Activated T-helper 1 cell treated with anti-CD3 and anti-CD28 coated beads, Interleukin-12 subunit alpha, Interleukin-12 subunit beta, Interleukin-2, Interleukin-4 antibody, amounts not matched to agents 30 ng/mL and 10 ng/mL and 1 ng/mL, durations not matched to agents 14 hours and 24 hours and 36 hours (primary cell): ENCODE measurements at regions of chr19 and their contacts with region 1.

Region 1: GRCh38 chr19:58451358-58452101 is at the start of gene ZNF324B:
- DNase-seq: peak; percentile 95
- H3K4me3 Mint-ChIP-seq: peak within 1 kb of the TSS; percentile 85
- H3K27ac Mint-ChIP-seq: peak within 1 kb of the TSS; percentile 48
- H3K4me1 Mint-ChIP-seq: peaks cover 18% of the 10 kb centered on the region
- H3K27me3 Mint-ChIP-seq: peaks cover 7% of the 10 kb centered on the region
- total RNA-seq, gene ZNF324B: 14.3 and 15.1 TPM in 2 replicates

Region 2: DNA sequence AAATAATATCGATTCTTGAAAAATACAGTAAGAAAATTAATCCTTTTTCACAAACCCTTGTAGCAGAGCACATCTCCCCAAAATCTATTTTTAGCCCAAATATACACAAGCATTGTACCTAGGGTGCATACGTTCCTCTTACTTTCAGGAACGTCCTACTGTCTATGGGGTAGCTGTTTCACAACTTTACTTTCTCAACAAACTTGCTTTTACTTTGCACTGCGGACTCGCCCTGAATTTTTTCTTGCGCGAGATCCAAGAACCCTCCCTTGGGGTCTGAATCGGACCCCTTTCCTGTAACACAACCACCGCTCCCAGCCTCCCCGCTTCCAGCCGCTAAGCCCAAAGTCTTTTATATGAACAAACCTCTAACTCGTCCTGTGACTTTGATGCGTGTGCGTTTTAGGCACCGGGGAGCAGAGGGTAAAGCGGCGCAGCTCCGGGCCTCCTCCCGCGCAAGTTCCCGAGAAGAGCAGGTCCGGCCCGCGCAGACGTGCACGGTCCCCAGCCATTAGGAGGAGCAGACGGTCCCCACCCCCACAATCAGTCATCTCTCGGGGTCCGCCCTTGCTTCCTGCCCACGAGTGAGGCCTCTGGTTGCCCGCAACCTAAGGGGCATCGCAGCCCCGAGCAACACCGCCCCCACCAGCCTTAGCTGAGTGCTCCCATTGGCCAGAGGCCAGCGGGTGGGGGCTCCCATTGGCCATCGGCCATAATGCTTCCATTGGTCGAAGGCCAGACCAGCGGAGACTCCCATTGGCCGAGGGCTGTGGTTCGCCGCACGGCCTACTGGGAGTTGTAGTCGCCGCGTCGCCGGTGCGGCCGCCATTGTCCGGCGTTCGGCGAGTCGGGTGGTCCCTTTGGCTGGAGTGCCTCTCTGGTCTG is 173.1 kb before region 1 on chr19 and contains the start of gene ZNF8:
- intact Hi-C with region 1: loop called (anchors 1 kb)
- DNase-seq: peak; percentile 97
- H3K4me3 Mint-ChIP-seq: peak within 1 kb of the TSS; percentile 92
- H3K27ac Mint-ChIP-seq: peak within 1 kb of the TSS; percentile 93
- H3K4me1 Mint-ChIP-seq: peaks cover 23% of the 10 kb centered on the region
- H3K27me3 Mint-ChIP-seq: no peaks in the 10 kb centered on the region
- total RNA-seq, gene ZNF8: 4.0 and 4.4 TPM in 2 replicates

Region 3: GRCh38 chr19:58346961-58347931 is 104.3 kb before region 1 on chr19:
- intact Hi-C with region 1: loop called (anchors 1 kb)
- DNase-seq: peak; percentile 63
- H3K4me3 Mint-ChIP-seq: peak overlapping the region; percentile 92
- H3K27ac Mint-ChIP-seq: peak overlapping the region; percentile 83
- H3K4me1 Mint-ChIP-seq: peaks cover 29% of the 10 kb centered on the region
- H3K27me3 Mint-ChIP-seq: no peaks in the 10 kb centered on the region

Region 4: GRCh38 chr19:58362272-58362994 is 89.1 kb before region 1 on chr19 and contains the start of gene ZNF497:
- intact Hi-C with region 1: loop called (anchors 1 kb)
- DNase-seq: peak; percentile 95
- H3K4me3 Mint-ChIP-seq: peak within 1 kb of the TSS; percentile 94
- H3K27ac Mint-ChIP-seq: peak within 1 kb of the TSS; percentile 95
- H3K4me1 Mint-ChIP-seq: peaks cover 7% of the 10 kb centered on the region
- H3K27me3 Mint-ChIP-seq: no peaks in the 10 kb centered on the region
- total RNA-seq, gene ZNF497: 0.76 and 0.93 TPM in 2 replicates

Region 5: GRCh38 chr19:58386576-58387337 is 64.8 kb before region 1 on chr19 and contains the start of gene RPS5:
- intact Hi-C with region 1: loop called (anchors 1 kb)
- DNase-seq: peak; percentile 95
- H3K4me3 Mint-ChIP-seq: peak within 1 kb of the TSS; percentile 93
- H3K27ac Mint-ChIP-seq: peak within 1 kb of the TSS; percentile 99
- H3K4me1 Mint-ChIP-seq: peaks cover 35% of the 10 kb centered on the region
- H3K27me3 Mint-ChIP-seq: no peaks in the 10 kb centered on the region
- total RNA-seq, gene RPS5: 1,157 and 1,161 TPM in 2 replicates

Region 6: GRCh38 chr19:58466760-58467589 is 15.4 kb after region 1 on chr19 and contains the start of gene ZNF324:
- intact Hi-C with region 1: loop called (anchors 1 kb)
- DNase-seq: peak; percentile 96
- H3K4me3 Mint-ChIP-seq: peak within 1 kb of the TSS; percentile 88
- H3K27ac Mint-ChIP-seq: peak within 1 kb of the TSS; percentile 71
- H3K4me1 Mint-ChIP-seq: peaks cover 17% of the 10 kb centered on the region
- H3K27me3 Mint-ChIP-seq: no peaks in the 10 kb centered on the region
- total RNA-seq, gene ZNF324: 12.8 and 15.5 TPM in 2 replicates

Region 7: GRCh38 chr19:58483776-58484175 is 32.2 kb after region 1 on chr19:
- intact Hi-C with region 1: no loop called
- DNase-seq: no peak
- H3K4me3 Mint-ChIP-seq: no peak overlapping the region
- H3K27ac Mint-ChIP-seq: no peak overlapping the region
- H3K4me1 Mint-ChIP-seq: peaks cover 6% of the 10 kb centered on the region
- H3K27me3 Mint-ChIP-seq: no peaks in the 10 kb centered on the region

Region 8: GRCh38 chr19:58499021-58499927 is 47.7 kb after region 1 on chr19:
- intact Hi-C with region 1: loop called (anchors 1 kb)
- DNase-seq: peak; percentile 96
- H3K4me3 Mint-ChIP-seq: peak overlapping the region; percentile 91
- H3K27ac Mint-ChIP-seq: peak overlapping the region; percentile 91
- H3K4me1 Mint-ChIP-seq: peaks cover 21% of the 10 kb centered on the region
- H3K27me3 Mint-ChIP-seq: peaks cover 7% of the 10 kb centered on the region